CD4-positive, alpha-beta T cell (primary cell): ENCODE measurements at regions of chr14 and their contacts with region 1.

Region 1: DNA sequence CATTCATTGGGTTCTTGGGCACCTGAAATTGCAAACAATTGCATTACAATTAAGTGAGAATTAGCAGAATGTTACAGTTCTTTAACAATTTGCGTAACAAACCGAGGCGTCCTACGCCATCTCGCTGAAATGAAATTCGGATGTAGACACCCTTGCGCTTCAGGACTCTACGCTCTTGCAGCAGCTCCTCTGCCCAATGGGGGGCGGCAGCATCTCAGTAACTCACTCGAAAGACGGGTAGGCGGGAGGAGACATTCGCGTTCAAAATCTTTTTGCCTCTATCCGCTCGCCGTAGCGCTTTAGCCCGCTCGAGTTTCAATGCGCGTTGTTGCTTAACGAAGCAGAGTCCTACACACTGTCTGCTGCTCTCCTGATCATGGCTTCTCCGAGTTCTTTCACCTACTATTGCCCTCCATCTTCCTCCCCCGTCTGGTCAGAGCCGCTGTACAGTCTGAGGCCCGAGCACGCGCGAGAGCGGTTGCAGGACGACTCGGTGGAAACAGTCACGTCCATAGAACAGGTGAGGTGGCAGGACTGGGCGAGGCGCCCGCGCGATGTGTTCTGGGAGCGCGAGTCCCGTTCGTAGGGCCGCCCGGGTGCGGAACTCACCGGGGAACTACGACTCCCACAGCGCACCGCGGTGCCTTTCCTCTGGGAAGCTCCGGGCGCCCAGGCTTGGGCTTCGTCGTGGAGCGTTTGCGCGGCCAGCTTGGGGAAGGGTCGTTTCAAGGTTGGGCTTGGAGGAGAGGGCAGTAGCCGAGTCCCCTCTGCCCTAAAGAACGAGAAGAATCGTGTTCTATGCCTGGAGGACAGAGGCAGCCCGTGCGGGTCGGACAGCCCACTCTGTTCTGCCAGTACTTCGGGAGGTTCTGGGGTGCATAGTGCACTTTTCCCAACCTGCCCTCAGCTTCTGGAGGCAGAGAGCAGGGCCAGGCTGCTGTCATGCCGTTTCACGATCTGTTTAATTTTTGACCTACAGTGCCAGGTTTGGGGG is at the start of gene FNTB:
- DNase-seq: peak; percentile 83 to 97 (median 88)
- ATAC-seq: peak; percentile 89
- H3K4me3 ChIP-seq: peak within 1 kb of the TSS; percentile 84
- H3K4me3 Mint-ChIP-seq: peak within 1 kb of the TSS; percentile 97
- H3K27ac ChIP-seq: peak within 1 kb of the TSS; percentile 52 to 69
- H3K27ac Mint-ChIP-seq: peak within 1 kb of the TSS; percentile 91
- H3K4me1 ChIP-seq: peaks cover 50% of the 10 kb centered on the region
- H3K4me1 Mint-ChIP-seq: peaks cover 62% of the 10 kb centered on the region
- H3K27me3 ChIP-seq: no peaks in the 10 kb centered on the region
- H3K27me3 Mint-ChIP-seq: no peaks in the 10 kb centered on the region
- CTCF ChIP-seq: peak; percentile 90
- total RNA-seq, gene FNTB: 7.5 to 7.9 TPM

Region 2: DNA sequence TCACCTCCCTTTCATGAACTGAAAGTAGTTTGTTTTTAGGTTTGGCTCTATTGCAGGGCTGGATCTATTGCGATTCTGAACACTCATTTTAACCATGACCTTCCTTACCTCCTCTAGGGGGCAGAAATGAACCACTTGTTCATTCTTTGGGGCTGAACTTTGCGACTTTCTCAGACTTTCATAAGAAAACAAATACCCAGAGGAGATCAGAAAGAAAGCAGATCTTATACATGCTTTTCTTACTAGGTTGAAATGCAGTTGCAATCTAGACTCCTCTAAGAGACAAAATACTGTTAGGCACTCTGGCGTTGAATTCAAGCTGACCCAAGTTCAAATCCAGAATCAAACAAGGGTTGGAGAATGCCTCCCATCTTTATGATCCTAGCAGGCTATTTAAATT is 315.3 kb before region 1 on chr14:
- CTCF ChIA-PET with region 1: no interaction called
- POLR2A ChIA-PET with region 1: no interaction called
- intact Hi-C with region 1: loop called in 1 of 2 experiments (anchors 10 kb)
- DNase-seq: peak in 4 of 14 experiments; percentile 13 to 79 (median 77)
- ATAC-seq: peak; percentile 62
- H3K4me3 ChIP-seq: no peak overlapping the region
- H3K4me3 Mint-ChIP-seq: no peak overlapping the region
- H3K27ac ChIP-seq: no peak overlapping the region
- H3K27ac Mint-ChIP-seq: no peak overlapping the region
- H3K4me1 ChIP-seq: peaks cover 44% of the 10 kb centered on the region
- H3K4me1 Mint-ChIP-seq: peaks cover 28% of the 10 kb centered on the region
- H3K27me3 ChIP-seq: no peaks in the 10 kb centered on the region
- H3K27me3 Mint-ChIP-seq: no peaks in the 10 kb centered on the region
- CTCF ChIP-seq: peak; percentile 65

Region 3: GRCh38 chr14:64823305-64823861 is 163.5 kb before region 1 on chr14:
- CTCF ChIA-PET with region 1: interaction called, 5 read pairs
- POLR2A ChIA-PET with region 1: no interaction called
- intact Hi-C with region 1: loop called (anchors 1 kb)
- DNase-seq: peak; percentile 45 to 83 (median 60)
- ATAC-seq: peak; percentile 83
- H3K4me3 ChIP-seq: no peak overlapping the region
- H3K4me3 Mint-ChIP-seq: peak overlapping the region; percentile 64
- H3K27ac ChIP-seq: no peak overlapping the region
- H3K27ac Mint-ChIP-seq: no peak overlapping the region
- H3K4me1 ChIP-seq: peaks cover 8% of the 10 kb centered on the region
- H3K4me1 Mint-ChIP-seq: peaks cover 5% of the 10 kb centered on the region
- H3K27me3 ChIP-seq: peaks cover 0 to 8% of the 10 kb centered on the region in 2 experiments
- H3K27me3 Mint-ChIP-seq: peaks cover 14% of the 10 kb centered on the region
- CTCF ChIP-seq: peak; percentile 76

Region 4: GRCh38 chr14:64928239-64929013 is 58.4 kb before region 1 on chr14:
- CTCF ChIA-PET with region 1: interaction called, 7 read pairs
- POLR2A ChIA-PET with region 1: interaction called, 5 read pairs
- intact Hi-C with region 1: loop called in 1 of 2 experiments (anchors 5 kb)
- DNase-seq: peak in 3 of 14 experiments; percentile 56 to 80 (median 59)
- ATAC-seq: peak; percentile 80
- H3K4me3 ChIP-seq: peak overlapping the region; percentile 9
- H3K4me3 Mint-ChIP-seq: no peak overlapping the region
- H3K27ac ChIP-seq: peak overlapping the region; percentile 61 to 71
- H3K27ac Mint-ChIP-seq: no peak overlapping the region
- H3K4me1 ChIP-seq: peaks cover 41% of the 10 kb centered on the region
- H3K4me1 Mint-ChIP-seq: peaks cover 21% of the 10 kb centered on the region
- H3K27me3 ChIP-seq: no peaks in the 10 kb centered on the region
- H3K27me3 Mint-ChIP-seq: no peaks in the 10 kb centered on the region
- CTCF ChIP-seq: no peak

Region 5: DNA sequence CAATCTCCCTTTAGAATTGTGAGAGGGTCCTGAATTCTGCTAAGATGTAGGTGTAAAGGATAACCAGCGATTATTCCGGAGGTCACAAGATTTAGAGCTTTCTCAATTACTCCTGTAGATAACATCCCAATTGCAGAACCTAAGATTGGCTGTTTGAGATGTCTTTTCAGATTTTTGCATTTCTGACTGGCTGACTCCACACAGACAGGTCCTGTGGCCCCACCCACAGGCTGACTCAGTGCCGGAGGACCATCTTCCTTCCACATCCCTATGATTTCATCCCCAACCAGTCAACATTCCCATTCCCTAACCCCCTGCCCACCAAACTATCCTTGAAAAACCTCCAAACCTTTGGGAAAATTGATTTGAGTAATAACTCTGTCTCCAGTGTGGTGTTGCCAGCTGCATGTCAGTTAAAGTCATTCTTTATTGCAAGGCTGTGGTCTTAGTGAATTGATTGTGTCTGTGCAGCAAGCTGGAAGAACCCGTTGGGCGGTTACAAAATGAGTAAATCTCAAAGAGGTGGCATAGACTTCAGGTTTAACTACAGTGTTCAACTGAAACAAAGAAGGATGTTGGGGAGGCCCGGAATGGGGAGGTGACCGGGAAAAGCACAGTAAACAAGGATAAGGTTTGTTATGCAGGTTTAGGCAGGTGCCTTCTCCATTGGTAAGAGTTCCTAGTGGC is 10.4 kb after region 1 on chr14:
- CTCF ChIA-PET with region 1: interaction called, 9 read pairs
- POLR2A ChIA-PET with region 1: interaction called, 11 read pairs
- intact Hi-C with region 1: no loop called
- DNase-seq: peak in 2 of 14 experiments; percentile 27 to 30
- ATAC-seq: peak; percentile 71
- H3K4me3 ChIP-seq: no peak overlapping the region
- H3K4me3 Mint-ChIP-seq: peak overlapping the region; percentile 9
- H3K27ac ChIP-seq: no peak overlapping the region
- H3K27ac Mint-ChIP-seq: no peak overlapping the region
- H3K4me1 ChIP-seq: peaks cover 4% of the 10 kb centered on the region
- H3K4me1 Mint-ChIP-seq: peaks cover 10% of the 10 kb centered on the region
- H3K27me3 ChIP-seq: no peaks in the 10 kb centered on the region
- H3K27me3 Mint-ChIP-seq: no peaks in the 10 kb centered on the region
- CTCF ChIP-seq: no peak

Region 6: DNA sequence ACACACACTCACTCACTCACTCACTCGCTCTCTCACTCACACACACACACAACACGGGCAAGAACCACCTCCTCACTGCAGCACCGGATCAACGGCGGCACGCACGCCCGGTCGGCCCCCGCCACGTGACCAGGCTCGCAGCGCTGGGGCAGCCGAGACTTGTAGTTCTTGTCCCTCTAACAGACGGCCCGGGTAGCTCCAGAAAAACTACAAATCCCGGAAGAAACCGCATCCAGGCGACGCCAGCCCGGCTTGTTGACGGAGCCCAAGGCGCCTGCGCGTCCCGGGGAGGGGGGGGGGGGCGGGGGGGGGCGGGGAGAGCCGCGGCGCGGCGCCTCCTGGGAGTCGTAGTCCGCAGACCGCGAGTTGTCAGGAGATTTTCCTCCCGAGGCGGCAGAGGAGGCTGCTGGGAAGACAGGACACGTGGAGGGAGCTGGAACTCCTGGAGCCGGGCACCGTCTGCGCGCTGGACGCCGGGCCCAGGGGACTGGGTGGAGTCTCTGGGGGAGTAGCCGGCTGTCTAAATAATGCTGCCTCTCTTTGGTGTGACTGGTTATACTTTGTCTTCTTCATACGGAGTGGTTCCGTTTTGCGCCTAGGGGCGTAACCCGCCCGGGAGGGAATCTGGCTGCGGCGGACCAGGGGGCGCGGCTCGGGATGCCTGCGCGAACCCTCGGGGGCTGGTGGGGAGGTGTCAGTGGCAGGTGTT is 115.7 kb after region 1 on chr14 and contains the start of gene MAX:
- CTCF ChIA-PET with region 1: interaction called, 3 read pairs
- POLR2A ChIA-PET with region 1: interaction called, 22 read pairs
- intact Hi-C with region 1: loop called (anchors 2 kb)
- DNase-seq: peak; percentile 96 to 100 (median 98)
- ATAC-seq: peak; percentile 89
- H3K4me3 ChIP-seq: peak within 1 kb of the TSS; percentile 98
- H3K4me3 Mint-ChIP-seq: peak within 1 kb of the TSS; percentile 91
- H3K27ac ChIP-seq: peak within 1 kb of the TSS; percentile 98 to 100
- H3K27ac Mint-ChIP-seq: peak within 1 kb of the TSS; percentile 90
- H3K4me1 ChIP-seq: peaks cover 21% of the 10 kb centered on the region
- H3K4me1 Mint-ChIP-seq: peaks cover 44% of the 10 kb centered on the region
- H3K27me3 ChIP-seq: no peaks in the 10 kb centered on the region
- H3K27me3 Mint-ChIP-seq: peaks cover 4% of the 10 kb centered on the region
- CTCF ChIP-seq: no peak
- total RNA-seq, gene MAX: 159 to 171 TPM

Region 7: GRCh38 chr14:66070509-66071319 is 1083.8 kb after region 1 on chr14:
- CTCF ChIA-PET with region 1: no interaction called
- POLR2A ChIA-PET with region 1: no interaction called
- intact Hi-C with region 1: loop called in 1 of 2 experiments (anchors 5 kb)
- DNase-seq: peak; percentile 49 to 80 (median 69)
- ATAC-seq: peak; percentile 93
- H3K4me3 ChIP-seq: no peak overlapping the region
- H3K4me3 Mint-ChIP-seq: no peak overlapping the region
- H3K27ac ChIP-seq: no peak overlapping the region
- H3K27ac Mint-ChIP-seq: no peak overlapping the region
- H3K4me1 ChIP-seq: peaks cover 4% of the 10 kb centered on the region
- H3K4me1 Mint-ChIP-seq: peaks cover 4% of the 10 kb centered on the region
- H3K27me3 ChIP-seq: no peaks in the 10 kb centered on the region
- H3K27me3 Mint-ChIP-seq: peaks cover 5% of the 10 kb centered on the region
- CTCF ChIP-seq: peak; percentile 97